ENCODE measurements at regions of chr12 and their contacts with region 1.

Region 1: GRCh38 chr12:53551889-53552291 is 44.6 kb upstream of the NPFF start:
- DNase-seq: no peak
- ATAC-seq: no peak
- H3K4me3 ChIP-seq: no peak overlapping the region
- H3K27ac ChIP-seq: no peak overlapping the region
- H3K4me1 ChIP-seq: no peaks in the 10 kb centered on the region
- H3K27me3 ChIP-seq: no peaks in the 10 kb centered on the region
- CTCF ChIP-seq: no peak

Region 2: GRCh38 chr12:53618275-53618674 is 66.4 kb after region 1 on chr12:
- intact Hi-C with region 1: loop called in 1 of 3 experiments (anchors 10 kb)
- DNase-seq: no peak
- ATAC-seq: peak in 1 of 4 donors; percentile 27
- H3K4me3 ChIP-seq: no peak overlapping the region
- H3K27ac ChIP-seq: no peak overlapping the region
- H3K4me1 ChIP-seq: peaks cover 12 to 20% (median 16%) of the 10 kb centered on the region in 3 donors
- H3K27me3 ChIP-seq: no peaks in the 10 kb centered on the region
- CTCF ChIP-seq: no peak

Measured in pancreas (tissue), 10 donors.